Activated B cell treated with CpG ODN at 0.5 μM for 24 hours (primary cell): ENCODE measurements at regions of chr2 and their contacts with region 1.

Region 1: GRCh38 chr2:86764661-86765307 is 25.9 kb downstream of the CD8A start:
- DNase-seq: no peak
- ATAC-seq: peak; percentile 67
- H3K4me3 Mint-ChIP-seq: no peak overlapping the region
- H3K27ac Mint-ChIP-seq: no peak overlapping the region
- H3K4me1 Mint-ChIP-seq: peaks cover 5% of the 10 kb centered on the region
- H3K27me3 Mint-ChIP-seq: no peaks in the 10 kb centered on the region
- CTCF ChIP-seq: peak; percentile 43

Region 2: DNA sequence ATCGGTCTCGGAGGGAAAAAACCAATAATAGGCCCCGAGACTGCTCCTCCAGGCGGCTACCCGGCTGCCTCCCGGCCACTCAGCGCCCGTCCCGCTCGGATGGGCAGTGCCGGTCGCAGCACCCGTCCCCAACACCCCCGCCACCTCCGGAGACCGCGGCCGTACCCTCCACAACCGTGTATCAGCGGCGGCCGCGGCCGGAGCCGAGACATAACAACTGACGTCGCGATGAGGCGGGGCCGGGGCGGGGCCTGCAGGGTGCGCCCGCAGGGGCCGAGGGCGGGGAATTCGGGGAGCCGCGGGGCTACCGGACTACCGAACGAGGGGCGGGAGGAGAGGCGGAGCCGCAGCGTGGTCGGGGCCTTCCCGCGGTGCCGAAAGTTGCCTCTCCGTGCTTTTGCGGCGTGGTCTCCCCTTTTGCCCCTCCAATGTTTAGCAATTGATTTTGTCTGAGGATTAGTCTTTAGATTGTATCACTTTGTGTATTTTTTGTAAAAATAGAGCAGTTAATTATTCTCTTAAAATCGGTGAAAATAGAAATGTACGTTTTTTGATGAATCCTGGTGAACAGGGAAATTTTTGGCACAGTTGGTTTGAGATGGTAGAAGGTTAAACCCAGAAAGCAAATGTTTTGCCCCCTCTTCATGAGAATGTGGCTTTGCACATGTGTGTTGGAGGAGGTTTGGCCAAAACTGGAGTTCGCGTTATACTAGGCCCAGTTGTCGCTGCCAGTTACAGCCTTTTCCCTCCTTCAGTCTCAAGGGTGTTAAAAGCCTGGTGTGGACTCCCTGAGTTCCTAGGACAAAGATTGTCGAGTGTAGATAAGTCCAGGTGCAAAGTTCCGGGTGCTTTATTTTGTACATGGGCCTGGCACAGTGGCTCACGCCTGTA is 140.9 kb before region 1 on chr2 and contains the start of gene RNF103:
- CTCF ChIA-PET with region 1: no interaction called
- POLR2A ChIA-PET with region 1: no interaction called
- intact Hi-C with region 1: no loop called
- DNase-seq: peak; percentile 98
- ATAC-seq: peak; percentile 86
- H3K4me3 Mint-ChIP-seq: peak within 1 kb of the TSS; percentile 94
- H3K27ac Mint-ChIP-seq: peak within 1 kb of the TSS; percentile 96
- H3K4me1 Mint-ChIP-seq: peaks cover 35% of the 10 kb centered on the region
- H3K27me3 Mint-ChIP-seq: no peaks in the 10 kb centered on the region
- CTCF ChIP-seq: no peak
- total RNA-seq, gene RNF103: 18.6 and 22.2 TPM in 2 replicates

Region 3: GRCh38 chr2:86753606-86754005 is 11.2 kb before region 1 on chr2:
- CTCF ChIA-PET with region 1: interaction called, 11 read pairs
- POLR2A ChIA-PET with region 1: no interaction called
- intact Hi-C with region 1: no loop called
- DNase-seq: no peak
- ATAC-seq: no peak
- H3K4me3 Mint-ChIP-seq: no peak overlapping the region
- H3K27ac Mint-ChIP-seq: no peak overlapping the region
- H3K4me1 Mint-ChIP-seq: peaks cover 17% of the 10 kb centered on the region
- H3K27me3 Mint-ChIP-seq: no peaks in the 10 kb centered on the region
- CTCF ChIP-seq: no peak

Region 4: DNA sequence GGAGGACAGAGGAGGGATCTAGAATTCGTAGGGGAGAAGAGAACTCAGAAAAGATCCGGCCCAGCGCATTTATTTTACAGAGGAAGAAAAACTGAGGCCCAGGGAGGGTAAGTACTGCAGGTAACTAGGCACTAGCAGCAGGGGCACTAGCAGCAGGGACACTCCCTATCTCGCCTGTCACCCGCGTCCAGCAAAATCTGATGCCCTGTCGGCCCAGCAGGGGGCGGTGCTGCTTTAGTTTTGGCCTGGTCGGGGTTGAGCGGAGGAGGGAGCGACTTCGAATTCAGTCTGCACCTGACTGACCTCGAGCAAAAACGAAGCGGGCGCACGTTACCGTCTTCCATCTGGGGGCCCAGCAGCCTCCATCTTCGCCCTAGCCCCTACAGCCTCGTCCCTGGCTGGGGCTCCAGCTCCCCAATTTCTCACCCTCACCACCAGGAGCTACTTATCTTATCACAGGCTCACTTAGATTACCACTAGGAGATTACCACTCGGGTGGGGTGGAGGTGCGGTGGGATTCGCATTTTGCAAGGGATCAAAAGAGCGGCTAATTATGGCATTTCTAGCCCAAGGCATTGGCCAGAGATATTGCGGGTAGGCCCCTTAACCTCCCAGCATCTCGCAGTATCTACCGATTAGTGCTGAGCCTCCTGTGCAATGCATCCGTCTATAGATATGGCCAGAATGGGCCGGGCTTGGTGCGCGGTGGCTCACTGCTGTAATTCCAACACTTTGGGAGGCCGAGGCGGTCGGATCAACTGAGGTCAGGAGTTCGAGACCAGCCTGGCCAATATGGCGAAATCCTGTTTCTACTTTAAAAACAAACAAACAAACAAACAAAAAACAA is 43.8 kb after region 1 on chr2:
- CTCF ChIA-PET with region 1: interaction called, 8 read pairs
- POLR2A ChIA-PET with region 1: no interaction called
- intact Hi-C with region 1: loop called (anchors 2 kb)
- DNase-seq: peak; percentile 84
- ATAC-seq: peak; percentile 94
- H3K4me3 Mint-ChIP-seq: peak overlapping the region; percentile 89
- H3K27ac Mint-ChIP-seq: no peak overlapping the region
- H3K4me1 Mint-ChIP-seq: peaks cover 26% of the 10 kb centered on the region
- H3K27me3 Mint-ChIP-seq: peaks cover 48% of the 10 kb centered on the region
- CTCF ChIP-seq: no peak

Region 5: DNA sequence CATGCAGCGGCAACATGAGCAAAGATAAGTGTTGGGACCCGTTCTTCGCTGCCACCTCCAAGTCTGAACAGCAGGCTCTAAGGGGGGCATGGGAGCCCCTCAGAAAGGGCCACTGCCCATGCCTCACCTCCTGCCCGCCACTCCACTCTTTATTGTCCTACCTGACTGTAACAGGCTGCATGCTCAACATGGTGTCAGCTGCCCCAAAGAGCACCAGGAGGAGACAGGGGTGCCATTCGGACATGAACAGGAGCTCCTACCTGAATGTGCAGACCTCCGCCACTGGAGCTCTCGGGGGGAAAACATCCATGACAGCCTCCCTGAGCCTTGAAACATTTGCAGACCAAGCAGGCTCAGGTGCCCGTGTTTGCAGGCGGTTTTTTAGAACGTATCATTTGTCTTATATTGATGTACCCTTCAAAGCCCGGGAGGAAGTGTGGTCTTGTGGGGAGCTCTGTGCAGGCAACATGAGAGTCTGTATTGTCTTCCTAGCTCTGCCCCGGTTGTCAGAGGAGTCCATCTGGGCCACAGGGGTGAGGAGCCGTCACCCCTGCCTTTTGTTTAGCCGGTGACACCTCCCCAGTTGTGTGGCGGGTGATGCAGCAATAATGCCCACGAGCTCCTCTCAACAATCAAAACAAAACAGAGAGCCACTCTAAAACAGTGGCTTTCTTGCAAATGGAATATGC is 61.1 kb after region 1 on chr2:
- CTCF ChIA-PET with region 1: no interaction called
- POLR2A ChIA-PET with region 1: no interaction called
- intact Hi-C with region 1: no loop called
- DNase-seq: no peak
- ATAC-seq: no peak
- H3K4me3 Mint-ChIP-seq: no peak overlapping the region
- H3K27ac Mint-ChIP-seq: no peak overlapping the region
- H3K4me1 Mint-ChIP-seq: no peaks in the 10 kb centered on the region
- H3K27me3 Mint-ChIP-seq: peaks cover 2% of the 10 kb centered on the region
- CTCF ChIP-seq: no peak

Region 6: DNA sequence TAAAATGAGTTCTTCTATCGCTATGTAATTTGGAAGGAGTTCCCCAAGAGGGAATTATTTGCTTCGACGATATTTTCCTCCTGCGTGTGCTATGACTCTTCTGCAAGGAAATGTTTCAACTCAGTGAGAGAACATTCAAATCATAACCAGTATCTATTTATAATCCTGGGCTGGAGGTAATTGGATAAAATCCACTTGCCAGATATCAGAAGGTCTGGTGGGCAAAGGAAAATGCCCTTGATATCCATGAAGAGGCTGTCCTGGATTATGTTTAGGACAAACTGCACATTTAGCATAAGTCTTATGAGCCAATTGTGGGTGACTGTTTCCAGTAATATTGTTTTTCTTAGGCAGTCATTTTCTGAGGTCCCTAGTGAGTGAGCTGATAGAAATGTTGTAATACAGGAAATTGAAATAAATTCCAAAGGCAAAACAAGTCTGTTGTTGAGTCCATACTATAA is 1944.4 kb after region 1 on chr2:
- CTCF ChIA-PET with region 1: no interaction called
- POLR2A ChIA-PET with region 1: interaction called, 10 read pairs
- intact Hi-C with region 1: no loop called
- DNase-seq: no peak
- ATAC-seq: no peak
- H3K4me3 Mint-ChIP-seq: no peak overlapping the region
- H3K27ac Mint-ChIP-seq: no peak overlapping the region
- H3K4me1 Mint-ChIP-seq: no peaks in the 10 kb centered on the region
- H3K27me3 Mint-ChIP-seq: no peaks in the 10 kb centered on the region
- CTCF ChIP-seq: no peak